Ascending aorta (tissue), 2 donors: ENCODE measurements at regions of chr17 and their contacts with region 1.

Region 1: GRCh38 chr17:46212634-46213435 is 19.6 kb upstream of the KANSL1 start:
- DNase-seq: peak in 1 of 2 donors; percentile 80
- H3K4me3 ChIP-seq: no peak overlapping the region
- H3K27ac ChIP-seq: peak overlapping the region in 1 of 2 donors; percentile 46
- H3K4me1 ChIP-seq: peaks cover 6 to 15% of the 10 kb centered on the region in 2 donors
- H3K27me3 ChIP-seq: no peaks in the 10 kb centered on the region
- CTCF ChIP-seq: peak; percentile 56 to 82 (median 77)

Region 2: DNA sequence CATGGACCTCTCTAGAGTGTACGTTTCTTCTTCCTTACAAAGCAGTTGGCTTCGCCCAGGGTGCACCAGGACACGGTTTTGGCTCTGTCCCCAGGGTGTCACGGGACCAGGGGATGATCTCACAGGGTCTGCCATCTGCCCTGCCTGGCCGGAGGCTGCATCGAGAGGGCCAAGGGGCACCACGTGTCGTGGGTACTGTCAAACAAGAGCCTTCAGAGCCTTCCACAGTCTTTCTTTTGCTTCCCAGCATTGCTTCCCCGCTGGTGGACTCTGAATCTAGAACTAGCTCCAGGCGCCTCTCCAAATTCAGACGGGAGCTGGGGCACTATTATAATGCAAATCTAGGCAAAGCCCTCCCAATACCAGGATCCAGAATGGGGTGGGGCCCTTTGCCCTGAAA is 270.6 kb before region 1 on chr17:
- intact Hi-C with region 1: no loop called
- DNase-seq: peak; percentile 27 to 78
- H3K4me3 ChIP-seq: no peak overlapping the region
- H3K27ac ChIP-seq: no peak overlapping the region
- H3K4me1 ChIP-seq: peaks cover 2 to 10% of the 10 kb centered on the region in 2 donors
- H3K27me3 ChIP-seq: no peaks in the 10 kb centered on the region
- CTCF ChIP-seq: no peak

Region 3: GRCh38 chr17:46002311-46002972 is 210.4 kb before region 1 on chr17:
- intact Hi-C with region 1: loop called (anchors 2 kb)
- DNase-seq: peak; percentile 17 to 86
- H3K4me3 ChIP-seq: no peak overlapping the region
- H3K27ac ChIP-seq: no peak overlapping the region
- H3K4me1 ChIP-seq: peaks cover 0 to 5% of the 10 kb centered on the region in 2 donors
- H3K27me3 ChIP-seq: no peaks in the 10 kb centered on the region
- CTCF ChIP-seq: peak; percentile 86 to 98 (median 97)

Region 4: GRCh38 chr17:46013502-46014165 is 199.2 kb before region 1 on chr17:
- intact Hi-C with region 1: no loop called
- DNase-seq: no peak
- H3K4me3 ChIP-seq: no peak overlapping the region
- H3K27ac ChIP-seq: no peak overlapping the region
- H3K4me1 ChIP-seq: no peaks in the 10 kb centered on the region
- H3K27me3 ChIP-seq: no peaks in the 10 kb centered on the region
- CTCF ChIP-seq: no peak

Region 5: DNA sequence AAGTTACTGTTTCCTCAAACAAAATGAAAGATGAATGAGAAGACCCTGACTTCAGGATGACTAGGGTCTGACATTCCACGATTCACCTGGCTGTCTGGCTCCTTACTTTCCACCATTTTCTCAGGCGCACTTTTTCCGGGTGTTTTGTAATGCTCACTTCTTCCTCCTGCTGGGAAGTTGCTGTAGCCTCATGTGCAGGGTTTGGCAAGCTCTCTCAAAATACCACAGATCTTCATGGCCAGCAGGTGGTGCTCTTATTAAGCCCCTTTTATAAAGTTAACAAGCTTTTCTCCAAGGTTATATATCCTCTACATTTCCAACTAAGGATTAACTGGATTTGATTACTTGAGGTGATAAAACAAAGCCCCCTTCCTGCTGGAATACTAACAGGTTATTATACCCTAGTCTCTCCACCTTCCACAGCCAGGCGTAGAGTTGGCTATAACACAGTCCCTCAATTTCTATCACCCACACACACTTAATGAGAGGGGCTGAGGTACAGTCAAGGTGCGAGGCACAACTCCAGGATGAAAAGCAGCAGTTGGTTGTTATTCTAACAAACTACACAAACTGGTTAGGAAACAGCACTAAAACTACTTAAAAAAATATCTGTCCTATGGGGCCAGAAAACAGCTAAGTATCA is 168.4 kb before region 1 on chr17:
- intact Hi-C with region 1: loop called (anchors 1 kb)
- DNase-seq: peak in 1 of 2 donors; percentile 91
- H3K4me3 ChIP-seq: no peak overlapping the region
- H3K27ac ChIP-seq: peak overlapping the region in 1 of 2 donors; percentile 58
- H3K4me1 ChIP-seq: peaks cover 0 to 4% of the 10 kb centered on the region in 2 donors
- H3K27me3 ChIP-seq: no peaks in the 10 kb centered on the region
- CTCF ChIP-seq: peak; percentile 88 to 94 (median 91)

Region 6: DNA sequence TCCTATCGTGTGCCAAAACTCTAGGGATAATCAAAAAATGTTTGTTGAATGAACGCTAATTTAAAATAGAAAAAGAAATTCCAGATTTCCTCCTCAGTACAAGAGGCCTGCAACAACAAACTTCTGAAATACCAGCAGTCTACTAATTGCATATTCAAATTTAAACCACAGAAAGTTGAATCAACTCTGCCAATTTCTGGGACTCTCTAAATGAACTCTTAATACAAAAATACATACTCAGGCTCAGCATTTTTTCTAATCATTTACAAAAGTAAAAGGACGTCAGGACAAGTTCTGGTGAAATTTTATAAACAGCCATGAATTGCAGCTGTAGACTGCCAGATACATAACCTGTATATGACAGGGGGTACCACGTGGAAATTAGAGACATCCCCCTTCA is 68.6 kb before region 1 on chr17:
- intact Hi-C with region 1: no loop called
- DNase-seq: no peak
- H3K4me3 ChIP-seq: no peak overlapping the region
- H3K27ac ChIP-seq: no peak overlapping the region
- H3K4me1 ChIP-seq: peaks cover 0 to 27% of the 10 kb centered on the region in 2 donors
- H3K27me3 ChIP-seq: no peaks in the 10 kb centered on the region
- CTCF ChIP-seq: no peak

Region 7: DNA sequence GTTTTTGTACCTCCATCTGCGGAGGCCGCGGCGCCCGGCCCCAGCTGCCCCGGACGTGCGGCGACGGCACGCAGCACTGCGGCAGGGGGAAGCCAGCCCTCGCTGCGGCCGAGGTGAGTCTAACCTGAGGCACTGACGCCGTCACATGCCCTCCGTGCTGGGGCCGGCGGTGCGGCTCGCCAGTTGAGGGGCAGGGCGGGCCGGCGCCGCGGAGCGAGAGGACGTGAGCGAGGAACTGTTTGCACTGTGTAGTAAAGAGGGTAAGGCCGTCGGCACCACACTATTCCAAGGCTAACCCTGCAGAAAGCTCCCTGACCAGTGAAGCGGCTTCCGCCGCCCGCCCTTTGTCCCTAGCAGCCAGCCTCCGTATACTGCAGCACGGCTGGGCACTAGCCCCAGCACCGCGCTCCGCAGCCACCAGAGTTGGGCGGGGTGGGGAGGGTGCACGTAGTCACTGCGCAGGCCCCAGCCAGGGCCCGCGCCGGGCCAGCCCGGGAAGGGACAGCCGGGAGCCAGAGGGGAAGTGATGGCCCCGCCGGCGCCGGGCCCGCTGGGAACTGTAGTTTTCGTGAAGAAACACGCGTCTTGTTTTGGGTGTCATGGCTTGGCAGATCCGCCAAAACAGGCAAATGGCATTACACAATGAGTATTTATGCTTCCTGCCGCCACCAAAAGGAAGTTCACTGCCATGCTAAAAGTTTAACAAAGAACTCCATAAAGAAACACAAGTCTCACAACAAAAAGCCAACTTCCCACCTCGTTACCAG is 19.0 kb before region 1 on chr17:
- intact Hi-C with region 1: loop called (anchors 1 kb)
- DNase-seq: peak; percentile 83 to 98
- H3K4me3 ChIP-seq: peak overlapping the region; percentile 99 to 100
- H3K27ac ChIP-seq: peak overlapping the region; percentile 99 to 100
- H3K4me1 ChIP-seq: peaks cover 13 to 33% of the 10 kb centered on the region in 2 donors
- H3K27me3 ChIP-seq: no peaks in the 10 kb centered on the region
- CTCF ChIP-seq: peak in 2 of 3 experiments; percentile 2 to 17

Region 8: DNA sequence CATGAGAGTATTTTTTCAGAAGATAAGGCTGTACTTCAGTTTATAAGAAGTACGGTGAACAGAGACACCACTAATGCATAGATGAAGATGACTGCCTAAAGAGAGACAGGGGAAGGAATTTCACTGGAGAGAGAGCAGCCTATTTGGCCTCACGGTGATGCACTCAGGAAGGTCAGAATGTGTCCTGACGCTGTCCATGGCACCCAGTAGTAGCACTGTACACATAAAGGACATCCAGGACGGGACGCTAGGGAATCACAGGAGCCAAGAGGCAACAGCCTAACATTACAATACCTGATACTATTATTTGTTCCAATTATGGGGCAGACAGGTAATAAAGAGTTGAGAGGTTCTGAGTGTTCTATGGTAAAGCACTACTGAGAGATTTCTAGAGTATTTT is 57.2 kb after region 1 on chr17:
- intact Hi-C with region 1: no loop called
- DNase-seq: no peak
- H3K4me3 ChIP-seq: no peak overlapping the region
- H3K27ac ChIP-seq: no peak overlapping the region
- H3K4me1 ChIP-seq: no peaks in the 10 kb centered on the region
- H3K27me3 ChIP-seq: no peaks in the 10 kb centered on the region
- CTCF ChIP-seq: no peak